ENCODE measurements at regions of chr16 and their contacts with region 1.

Region 1: GRCh38 chr16:15822957-15823356 is 33.9 kb downstream of the MYH11 start:
- DNase-seq: no peak
- ATAC-seq: no peak
- H3K4me3 Mint-ChIP-seq: no peak overlapping the region
- H3K27ac Mint-ChIP-seq: no peak overlapping the region
- H3K4me1 Mint-ChIP-seq: no peaks in the 10 kb centered on the region
- H3K27me3 Mint-ChIP-seq: no peaks in the 10 kb centered on the region
- CTCF ChIP-seq: no peak

Region 2: GRCh38 chr16:15765880-15766279 is 57.1 kb before region 1 on chr16:
- CTCF ChIA-PET with region 1: interaction called, 20 read pairs
- POLR2A ChIA-PET with region 1: no interaction called
- intact Hi-C with region 1: no loop called
- DNase-seq: peak; percentile 57
- ATAC-seq: peak; percentile 90
- H3K4me3 Mint-ChIP-seq: no peak overlapping the region
- H3K27ac Mint-ChIP-seq: no peak overlapping the region
- H3K4me1 Mint-ChIP-seq: no peaks in the 10 kb centered on the region
- H3K27me3 Mint-ChIP-seq: peaks cover 12% of the 10 kb centered on the region
- CTCF ChIP-seq: peak; percentile 41

Region 3: GRCh38 chr16:15777533-15778203 is 45.3 kb before region 1 on chr16:
- CTCF ChIA-PET with region 1: interaction called, 10 read pairs
- POLR2A ChIA-PET with region 1: no interaction called
- intact Hi-C with region 1: no loop called
- DNase-seq: peak; percentile 42
- ATAC-seq: peak; percentile 81
- H3K4me3 Mint-ChIP-seq: no peak overlapping the region
- H3K27ac Mint-ChIP-seq: no peak overlapping the region
- H3K4me1 Mint-ChIP-seq: no peaks in the 10 kb centered on the region
- H3K27me3 Mint-ChIP-seq: no peaks in the 10 kb centered on the region
- CTCF ChIP-seq: peak; percentile 25

Region 4: GRCh38 chr16:15811481-15812400 is 11.2 kb before region 1 on chr16:
- CTCF ChIA-PET with region 1: interaction called, 11 read pairs
- POLR2A ChIA-PET with region 1: no interaction called
- intact Hi-C with region 1: no loop called
- DNase-seq: no peak
- ATAC-seq: no peak
- H3K4me3 Mint-ChIP-seq: no peak overlapping the region
- H3K27ac Mint-ChIP-seq: no peak overlapping the region
- H3K4me1 Mint-ChIP-seq: no peaks in the 10 kb centered on the region
- H3K27me3 Mint-ChIP-seq: peaks cover 5% of the 10 kb centered on the region
- CTCF ChIP-seq: no peak